CD4-positive, alpha-beta T cell (primary cell): ENCODE measurements at regions of chr12 and their contacts with region 1.

Region 1: DNA sequence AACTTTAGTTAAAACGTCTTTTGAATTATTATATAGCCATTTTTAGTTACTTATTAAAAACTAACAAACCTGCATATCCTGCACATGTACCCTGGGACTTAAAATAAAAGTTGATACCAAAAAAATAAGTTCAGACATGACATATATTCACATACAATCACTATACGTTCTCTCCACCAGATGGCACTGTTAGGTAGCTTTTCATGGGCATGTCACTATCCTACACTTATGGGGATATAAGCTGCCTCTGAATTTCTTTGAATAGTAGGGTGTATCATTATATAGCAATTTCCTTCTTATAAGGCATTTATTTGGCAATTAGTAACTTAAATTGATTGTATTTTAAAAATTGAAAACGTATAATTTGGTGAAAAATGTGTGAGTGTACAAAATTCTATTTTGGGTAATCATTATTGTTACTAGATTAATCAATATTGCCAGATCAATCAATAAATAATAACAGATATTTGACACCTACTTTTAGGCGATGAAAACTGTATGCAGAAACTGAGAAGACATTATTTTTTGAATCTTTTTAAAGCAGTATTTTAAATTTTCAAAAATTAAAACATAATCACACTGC is 31.8 kb upstream of the OR10A7 start:
- DNase-seq: peak in 9 of 14 experiments; percentile 3 to 82 (median 19)
- ATAC-seq: peak; percentile 68
- H3K4me3 ChIP-seq: no peak overlapping the region
- H3K4me3 Mint-ChIP-seq: no peak overlapping the region
- H3K27ac ChIP-seq: no peak overlapping the region
- H3K27ac Mint-ChIP-seq: no peak overlapping the region
- H3K4me1 ChIP-seq: no peaks in the 10 kb centered on the region
- H3K4me1 Mint-ChIP-seq: no peaks in the 10 kb centered on the region
- H3K27me3 ChIP-seq: peaks cover 0 to 27% of the 10 kb centered on the region in 2 experiments
- H3K27me3 Mint-ChIP-seq: peaks cover 44% of the 10 kb centered on the region
- CTCF ChIP-seq: peak; percentile 83

Region 2: GRCh38 chr12:55320201-55320600 is 131.1 kb after region 1 on chr12:
- CTCF ChIA-PET with region 1: no interaction called
- POLR2A ChIA-PET with region 1: no interaction called
- intact Hi-C with region 1: loop called in 1 of 2 experiments (anchors 2 kb)
- DNase-seq: no peak
- ATAC-seq: no peak
- H3K4me3 ChIP-seq: no peak overlapping the region
- H3K4me3 Mint-ChIP-seq: no peak overlapping the region
- H3K27ac ChIP-seq: no peak overlapping the region
- H3K27ac Mint-ChIP-seq: no peak overlapping the region
- H3K4me1 ChIP-seq: no peaks in the 10 kb centered on the region
- H3K4me1 Mint-ChIP-seq: no peaks in the 10 kb centered on the region
- H3K27me3 ChIP-seq: peaks cover 4 to 17% of the 10 kb centered on the region in 2 experiments
- H3K27me3 Mint-ChIP-seq: peaks cover 34% of the 10 kb centered on the region
- CTCF ChIP-seq: no peak

Region 3: GRCh38 chr12:55619354-55620138 is 430.5 kb after region 1 on chr12:
- CTCF ChIA-PET with region 1: no interaction called
- POLR2A ChIA-PET with region 1: no interaction called
- intact Hi-C with region 1: loop called (anchors 1 kb)
- DNase-seq: peak in 10 of 14 experiments; percentile 3 to 85 (median 22)
- ATAC-seq: peak; percentile 96
- H3K4me3 ChIP-seq: no peak overlapping the region
- H3K4me3 Mint-ChIP-seq: no peak overlapping the region
- H3K27ac ChIP-seq: no peak overlapping the region
- H3K27ac Mint-ChIP-seq: no peak overlapping the region
- H3K4me1 ChIP-seq: no peaks in the 10 kb centered on the region
- H3K4me1 Mint-ChIP-seq: peaks cover 6% of the 10 kb centered on the region
- H3K27me3 ChIP-seq: peaks cover 0 to 9% of the 10 kb centered on the region in 2 experiments
- H3K27me3 Mint-ChIP-seq: peaks cover 48% of the 10 kb centered on the region
- CTCF ChIP-seq: peak; percentile 87

Region 4: GRCh38 chr12:55659486-55660385 is 470.7 kb after region 1 on chr12:
- CTCF ChIA-PET with region 1: no interaction called
- POLR2A ChIA-PET with region 1: no interaction called
- intact Hi-C with region 1: loop called (anchors 1 to 10 kb)
- DNase-seq: peak in 1 of 14 experiments; percentile 20
- ATAC-seq: no peak
- H3K4me3 ChIP-seq: no peak overlapping the region
- H3K4me3 Mint-ChIP-seq: no peak overlapping the region
- H3K27ac ChIP-seq: no peak overlapping the region
- H3K27ac Mint-ChIP-seq: no peak overlapping the region
- H3K4me1 ChIP-seq: peaks cover 4% of the 10 kb centered on the region
- H3K4me1 Mint-ChIP-seq: no peaks in the 10 kb centered on the region
- H3K27me3 ChIP-seq: peaks cover 0 to 2% of the 10 kb centered on the region in 2 experiments
- H3K27me3 Mint-ChIP-seq: peaks cover 5% of the 10 kb centered on the region
- CTCF ChIP-seq: no peak